AG04450 (cell line): ENCODE measurements at regions of chr10 and their contacts with region 1.

Region 1: DNA sequence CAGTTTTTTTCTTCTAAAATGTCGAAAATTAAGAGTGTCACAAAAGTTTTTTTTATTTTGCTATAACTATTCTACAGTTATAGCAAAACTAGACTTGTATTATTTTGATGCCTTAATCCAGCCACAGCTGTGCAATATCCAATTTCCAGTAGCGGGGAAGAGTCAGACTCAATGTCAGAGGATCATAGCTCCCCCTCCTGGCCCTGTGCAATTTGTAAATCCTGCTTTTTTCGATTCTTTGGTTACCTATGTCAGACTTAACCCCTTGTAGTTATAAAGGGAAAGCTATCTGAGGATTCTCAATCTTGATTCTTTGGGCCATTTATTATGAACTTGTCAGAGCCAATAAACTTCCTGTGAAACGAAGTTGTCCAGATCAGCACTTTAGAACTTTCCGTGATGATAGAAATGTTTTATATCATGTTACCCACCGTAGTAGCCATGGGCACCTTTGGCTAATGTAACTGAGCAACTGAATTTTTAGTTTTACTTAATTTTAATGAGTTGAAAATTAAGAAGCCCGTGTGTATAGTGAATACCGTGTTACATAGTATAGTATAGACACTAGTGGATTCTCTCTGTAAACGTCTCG is 87.7 kb upstream of the PRKCQ start:
- DNase-seq: no peak
- H3K4me3 ChIP-seq: no peak overlapping the region
- H3K27ac ChIP-seq: no peak overlapping the region
- H3K27me3 ChIP-seq: peaks cover 2% of the 10 kb centered on the region
- CTCF ChIP-seq: peak; percentile 77

Region 2: DNA sequence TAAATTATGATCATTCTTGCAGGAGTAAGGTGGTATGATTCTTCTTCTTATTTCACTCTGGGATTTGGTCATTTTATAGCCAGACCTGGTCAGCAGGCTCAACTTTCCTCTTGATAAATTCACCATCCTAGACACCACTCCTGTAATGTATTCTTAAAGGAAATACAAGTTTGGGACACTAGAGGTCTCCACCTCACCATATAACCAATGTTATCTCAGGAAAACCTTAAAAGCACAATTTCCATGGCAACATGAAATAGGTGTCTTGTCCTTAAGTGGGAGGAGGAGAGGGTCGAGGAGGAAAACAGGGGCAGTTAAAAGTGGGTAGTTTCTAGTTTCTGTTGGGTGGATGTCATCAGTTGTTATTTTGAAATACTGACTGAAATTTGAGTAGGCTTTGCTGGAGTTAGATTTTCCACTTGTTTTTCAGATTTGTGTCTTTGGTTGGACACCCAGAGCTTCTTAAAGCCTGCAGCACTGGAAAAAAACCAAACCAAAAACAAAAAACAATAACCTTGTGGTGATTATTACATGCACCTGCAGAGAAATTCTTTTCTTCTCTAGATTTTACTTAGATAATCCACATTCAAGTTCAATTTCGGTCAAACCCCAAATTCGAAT is 250.8 kb before region 1 on chr10:
- CTCF ChIA-PET with region 1: interaction called, 71 read pairs
- POLR2A ChIA-PET with region 1: no interaction called
- DNase-seq: no peak
- H3K4me3 ChIP-seq: no peak overlapping the region
- H3K27ac ChIP-seq: no peak overlapping the region
- H3K27me3 ChIP-seq: peaks cover 15% of the 10 kb centered on the region
- CTCF ChIP-seq: peak; percentile 73

Region 3: GRCh38 chr10:6678211-6678803 is 10.5 kb after region 1 on chr10:
- CTCF ChIA-PET with region 1: interaction called, 13 read pairs
- POLR2A ChIA-PET with region 1: no interaction called
- DNase-seq: no peak
- H3K4me3 ChIP-seq: no peak overlapping the region
- H3K27ac ChIP-seq: no peak overlapping the region
- H3K27me3 ChIP-seq: peaks cover 6% of the 10 kb centered on the region
- CTCF ChIP-seq: peak; percentile 70

Region 4: DNA sequence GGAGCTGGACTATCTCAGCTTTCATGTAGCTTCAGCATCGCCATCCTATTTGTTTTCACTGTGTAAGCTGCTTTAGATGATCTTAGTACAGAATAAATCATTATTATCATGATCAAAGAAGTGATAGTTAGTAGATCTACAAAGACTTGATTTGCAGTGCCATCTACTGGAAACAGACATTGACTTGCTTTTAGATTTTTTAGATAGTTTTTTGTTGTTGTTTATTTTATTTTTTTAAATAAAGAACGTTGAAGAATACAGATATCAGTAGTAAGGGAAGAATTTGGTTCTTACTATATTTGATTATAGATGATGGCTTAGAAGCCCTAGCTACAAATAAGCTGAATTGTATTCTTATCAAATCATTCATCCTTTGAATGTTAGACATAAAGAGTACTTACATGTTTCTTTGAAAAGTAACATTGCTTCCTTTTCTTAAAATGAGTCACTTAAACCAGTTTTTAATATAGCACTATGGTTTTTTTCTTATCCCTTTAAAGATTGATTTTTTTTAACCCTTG is 749.4 kb after region 1 on chr10:
- CTCF ChIA-PET with region 1: interaction called, 33 read pairs
- POLR2A ChIA-PET with region 1: no interaction called
- DNase-seq: peak; percentile 7
- H3K4me3 ChIP-seq: no peak overlapping the region
- H3K27ac ChIP-seq: no peak overlapping the region
- H3K27me3 ChIP-seq: peaks cover 17% of the 10 kb centered on the region
- CTCF ChIP-seq: peak; percentile 57